ENCODE measurements at regions of chr7 and their contacts with region 1.

Region 1: GRCh38 chr7:43260980-43261878 is 148.8 kb downstream of the HECW1 start:
- DNase-seq: peak; percentile 84
- ATAC-seq: peak; percentile 97
- H3K4me3 ChIP-seq: no peak overlapping the region
- H3K27ac ChIP-seq: no peak overlapping the region
- H3K4me1 ChIP-seq: no peaks in the 10 kb centered on the region; the same call in 1 of the 2 replicates
- H3K27me3 ChIP-seq: no peaks in the 10 kb centered on the region
- CTCF ChIP-seq: peak; percentile 94
- POLR2A ChIP-seq: no peak
- RAD21 ChIP-seq: peak; percentile 89

Region 2: DNA sequence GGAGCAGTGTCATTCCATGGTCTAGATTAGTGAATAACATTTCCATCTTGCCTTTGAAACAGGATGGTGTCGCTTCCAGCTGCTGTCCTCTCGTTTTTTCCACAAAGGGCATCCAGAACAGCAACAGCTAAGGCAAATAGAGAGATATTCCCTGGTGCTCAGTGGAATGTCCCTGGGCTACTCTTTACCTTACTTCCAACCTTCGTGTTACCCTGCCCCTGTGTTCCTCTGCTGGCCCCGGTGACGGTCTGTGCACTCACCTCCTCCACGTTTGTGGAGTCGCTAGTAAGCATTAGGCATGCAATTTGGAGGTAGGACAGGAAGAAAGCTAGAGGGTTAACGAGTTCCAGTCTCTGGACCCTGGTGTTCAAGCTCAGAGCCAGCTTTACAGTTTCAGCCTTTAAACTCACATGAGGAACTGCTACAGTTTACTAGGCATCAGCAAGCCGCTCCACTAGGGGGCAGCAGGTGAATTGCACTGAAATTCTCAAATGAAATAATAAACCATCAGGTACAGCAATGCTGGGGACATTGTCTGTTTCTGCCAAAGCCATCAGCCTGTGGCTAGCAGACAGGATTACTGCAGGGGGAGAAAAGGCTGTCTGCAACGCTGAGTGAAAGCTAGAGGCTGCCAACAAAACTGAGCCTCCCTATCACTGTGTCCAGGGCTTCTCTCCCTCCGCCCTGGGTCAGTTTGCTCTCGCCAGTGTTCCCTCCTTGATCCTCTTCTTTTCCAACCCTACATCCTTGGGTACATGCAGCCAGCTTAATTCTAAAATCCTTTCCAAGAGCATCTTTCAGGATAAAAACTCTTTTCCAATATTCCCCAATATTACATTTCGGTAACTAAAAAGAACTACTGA is 320.0 kb before region 1 on chr7:
- CTCF ChIA-PET with region 1: interaction called, 9 read pairs
- POLR2A ChIA-PET with region 1: no interaction called
- dilution Hi-C with region 1: no loop called
- in situ Hi-C with region 1: loop called (anchors 5 kb)
- intact Hi-C with region 1: loop called (anchors 1 kb)
- DNase-seq: peak; percentile 66
- ATAC-seq: peak; percentile 87
- H3K4me3 ChIP-seq: no peak overlapping the region
- H3K27ac ChIP-seq: no peak overlapping the region
- H3K4me1 ChIP-seq: no peaks in the 10 kb centered on the region
- H3K27me3 ChIP-seq: no peaks in the 10 kb centered on the region
- CTCF ChIP-seq: peak; percentile 90
- POLR2A ChIP-seq: no peak
- RAD21 ChIP-seq: peak; percentile 85

Region 3: DNA sequence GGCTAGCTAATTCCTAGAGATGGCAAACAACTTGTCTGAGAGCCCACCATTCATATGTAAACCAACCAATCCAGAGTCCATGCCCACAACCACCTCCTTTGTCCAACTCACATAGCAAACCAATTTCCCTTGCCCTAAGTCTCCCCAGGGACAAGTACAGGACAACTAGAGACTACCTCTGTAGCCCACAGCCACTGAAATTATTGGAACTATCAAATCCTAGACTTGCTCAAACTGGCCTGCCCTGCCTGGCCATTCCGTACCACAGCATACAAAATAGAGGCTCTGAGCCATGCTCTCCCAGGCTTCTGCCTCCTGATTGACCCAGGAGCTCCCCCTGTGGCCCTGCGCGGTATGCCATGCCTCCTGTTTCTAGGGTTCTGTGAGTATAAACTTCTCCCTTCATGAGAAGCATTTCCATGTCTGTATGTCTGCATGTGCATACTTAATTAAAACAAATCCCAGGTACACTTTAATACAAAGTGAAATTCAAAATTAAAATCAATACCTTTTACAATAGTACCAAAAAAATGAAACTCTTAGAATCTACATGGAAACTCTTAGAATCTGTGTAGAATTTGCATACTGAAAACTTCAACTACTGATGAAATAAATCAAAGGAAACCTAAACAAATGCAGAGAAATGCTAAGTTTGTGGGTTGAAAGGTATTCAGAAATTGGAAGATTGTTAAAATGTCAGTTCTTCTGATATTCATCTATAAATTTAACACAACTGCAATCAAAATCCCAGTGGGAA is 152.8 kb before region 1 on chr7:
- CTCF ChIA-PET with region 1: no interaction called
- POLR2A ChIA-PET with region 1: no interaction called
- dilution Hi-C with region 1: no loop called
- in situ Hi-C with region 1: no loop called
- intact Hi-C with region 1: loop called (anchors 1 kb)
- DNase-seq: peak; percentile 39
- ATAC-seq: peak; percentile 87
- H3K4me3 ChIP-seq: no peak overlapping the region
- H3K27ac ChIP-seq: no peak overlapping the region
- H3K4me1 ChIP-seq: peaks cover 2% of the 10 kb centered on the region; the same call in 1 of the 2 replicates
- H3K27me3 ChIP-seq: peaks cover 35% of the 10 kb centered on the region
- CTCF ChIP-seq: peak; percentile 78
- POLR2A ChIP-seq: no peak
- RAD21 ChIP-seq: peak; percentile 63

Region 4: DNA sequence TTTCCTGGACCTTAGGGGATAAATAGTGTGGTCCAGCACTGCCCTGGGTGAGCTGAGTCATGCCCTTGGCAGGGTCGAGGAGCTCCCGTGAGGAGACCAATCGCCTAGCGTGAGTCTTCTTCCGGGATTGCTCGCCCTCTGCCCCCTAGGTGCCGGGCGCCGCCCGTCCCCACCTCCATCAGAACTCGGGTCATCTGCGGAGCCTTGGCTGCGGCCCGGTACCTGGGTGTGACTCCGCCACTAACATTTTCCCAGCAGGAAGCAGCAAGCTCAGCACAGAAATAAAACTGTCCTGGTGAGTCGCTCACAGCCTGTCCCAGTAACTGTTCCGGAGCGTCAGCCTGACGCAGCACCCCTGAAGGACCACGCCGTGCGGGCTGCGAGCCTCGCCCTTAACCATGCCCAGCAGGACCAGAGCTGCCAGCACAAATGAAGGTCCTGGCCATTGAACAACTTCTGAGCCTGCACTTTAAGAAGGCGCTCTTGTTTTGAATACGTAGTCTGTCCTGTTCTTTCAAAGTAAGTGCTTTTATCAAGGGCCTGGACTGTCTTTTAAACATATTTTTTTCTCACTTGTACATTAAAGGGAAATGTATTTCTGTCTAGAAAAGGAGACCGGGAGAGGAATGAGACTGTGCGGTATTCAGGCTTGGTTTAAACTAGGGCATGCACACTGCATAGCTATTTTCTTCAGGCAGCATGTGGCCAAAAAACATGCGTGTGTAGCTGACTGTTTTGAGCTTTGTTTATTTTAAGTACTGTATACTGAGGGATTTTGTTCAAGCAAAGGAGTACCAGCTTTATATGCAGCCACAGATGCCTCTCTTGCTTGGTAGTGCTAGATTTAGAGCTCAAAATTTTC is 12.0 kb before region 1 on chr7:
- CTCF ChIA-PET with region 1: interaction called, 12 read pairs
- POLR2A ChIA-PET with region 1: interaction called, 4 read pairs
- dilution Hi-C with region 1: no loop called
- in situ Hi-C with region 1: no loop called
- intact Hi-C with region 1: no loop called
- DNase-seq: peak; percentile 77
- ATAC-seq: peak; percentile 85
- H3K4me3 ChIP-seq: peak overlapping the region; percentile 29
- H3K27ac ChIP-seq: peak overlapping the region; percentile 94
- H3K4me1 ChIP-seq: peaks cover 11% of the 10 kb centered on the region
- H3K27me3 ChIP-seq: no peaks in the 10 kb centered on the region
- CTCF ChIP-seq: no peak
- POLR2A ChIP-seq: 0 out of 2 replicates have a peak, but pooled peaks have one; percentile 21
- RAD21 ChIP-seq: no peak

Region 5: GRCh38 chr7:43353902-43354301 is 92.7 kb after region 1 on chr7:
- CTCF ChIA-PET with region 1: no interaction called
- POLR2A ChIA-PET with region 1: no interaction called
- dilution Hi-C with region 1: no loop called
- in situ Hi-C with region 1: no loop called
- intact Hi-C with region 1: no loop called
- DNase-seq: no peak
- ATAC-seq: no peak
- H3K4me3 ChIP-seq: no peak overlapping the region
- H3K27ac ChIP-seq: no peak overlapping the region
- H3K4me1 ChIP-seq: no peaks in the 10 kb centered on the region
- H3K27me3 ChIP-seq: no peaks in the 10 kb centered on the region
- CTCF ChIP-seq: no peak
- POLR2A ChIP-seq: no peak
- RAD21 ChIP-seq: 0 out of 2 replicates have a peak, but pooled peaks have one; percentile 4

Region 6: GRCh38 chr7:43721193-43721806 is 460.1 kb after region 1 on chr7:
- CTCF ChIA-PET with region 1: no interaction called
- POLR2A ChIA-PET with region 1: no interaction called
- dilution Hi-C with region 1: no loop called
- in situ Hi-C with region 1: loop called (anchors 25 kb)
- intact Hi-C with region 1: loop called (anchors 5 kb)
- DNase-seq: peak; percentile 71
- ATAC-seq: peak; percentile 46
- H3K4me3 ChIP-seq: no peak overlapping the region
- H3K27ac ChIP-seq: no peak overlapping the region
- H3K4me1 ChIP-seq: peaks cover 3% of the 10 kb centered on the region
- H3K27me3 ChIP-seq: no peaks in the 10 kb centered on the region
- CTCF ChIP-seq: peak; percentile 75
- POLR2A ChIP-seq: no peak
- RAD21 ChIP-seq: peak; percentile 73

Measured in IMR-90 (cell line).